Mammary epithelial cell (primary cell): ENCODE measurements at regions of chr1 and their contacts with region 1.

Region 1: GRCh38 chr1:182789138-182790076 is at the start of gene NPL:
- DNase-seq: peak; percentile 75
- H3K4me3 ChIP-seq: peak within 1 kb of the TSS; percentile 67 to 79 (median 75)
- H3K27ac ChIP-seq: no peak within 1 kb of the TSS
- H3K4me1 ChIP-seq: peaks cover 12% of the 10 kb centered on the region
- H3K27me3 ChIP-seq: no peaks in the 10 kb centered on the region
- CTCF ChIP-seq: no peak
- total RNA-seq, gene NPL: 3.3 to 4.3 TPM

Region 2: DNA sequence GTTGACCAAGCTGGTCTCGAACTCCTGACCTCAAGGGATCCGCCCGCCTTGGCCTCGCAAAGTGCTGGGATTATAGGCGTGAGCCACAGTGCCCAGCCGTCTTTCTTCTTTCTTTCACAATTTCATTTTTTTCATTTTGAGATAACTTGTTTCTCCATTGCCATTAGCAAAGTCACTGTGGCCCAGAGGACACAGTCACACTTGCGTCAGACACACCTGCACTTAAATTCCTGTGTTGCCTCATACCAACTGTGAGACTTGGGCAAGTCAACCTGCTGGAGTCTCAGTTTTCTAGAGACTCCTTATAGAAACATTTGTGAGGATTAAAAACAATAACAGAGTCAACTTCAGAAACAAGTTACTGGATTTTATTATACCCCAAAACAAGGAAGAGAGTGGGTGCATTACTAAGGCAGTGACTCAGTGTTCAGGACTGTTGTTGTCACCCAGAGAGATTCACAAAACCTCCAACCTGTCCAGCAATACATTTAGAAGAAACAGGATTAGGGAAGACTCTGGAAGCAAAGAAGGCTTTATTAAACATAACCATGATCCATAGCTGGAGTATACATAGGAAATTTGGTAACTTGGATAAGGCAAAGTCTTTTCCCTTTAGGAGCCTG is 391.5 kb before region 1 on chr1:
- CTCF ChIA-PET with region 1: no interaction called
- dilution Hi-C with region 1: no loop called
- in situ Hi-C with region 1: no loop called
- intact Hi-C with region 1: loop called (anchors 5 kb)
- DNase-seq: peak; percentile 75
- H3K4me3 ChIP-seq: no peak overlapping the region
- H3K27ac ChIP-seq: no peak overlapping the region
- H3K4me1 ChIP-seq: peaks cover 18% of the 10 kb centered on the region
- H3K27me3 ChIP-seq: no peaks in the 10 kb centered on the region
- CTCF ChIP-seq: no peak

Region 3: DNA sequence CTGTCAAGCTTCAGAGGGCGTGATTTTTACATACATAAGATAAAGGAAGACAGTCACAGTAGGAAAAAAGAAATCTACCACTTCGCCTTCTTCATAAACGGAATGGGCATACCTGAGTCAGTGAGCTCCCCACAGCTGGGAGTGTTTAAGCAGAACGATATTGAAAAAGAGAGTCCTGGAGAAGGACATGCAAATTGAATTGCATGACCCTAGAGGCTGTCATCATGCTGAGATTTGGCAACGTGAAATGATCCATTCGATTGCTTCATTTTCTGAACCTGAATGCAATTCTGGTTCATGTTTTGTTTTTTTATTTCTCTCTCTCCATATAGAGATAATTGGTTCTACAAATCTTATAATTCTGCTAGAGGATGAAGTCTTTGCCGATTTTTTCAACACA is 335.8 kb before region 1 on chr1:
- CTCF ChIA-PET with region 1: no interaction called
- dilution Hi-C with region 1: no loop called
- in situ Hi-C with region 1: loop called (anchors 10 kb)
- intact Hi-C with region 1: no loop called
- DNase-seq: no peak
- H3K4me3 ChIP-seq: no peak overlapping the region
- H3K27ac ChIP-seq: no peak overlapping the region
- H3K4me1 ChIP-seq: no peaks in the 10 kb centered on the region
- H3K27me3 ChIP-seq: peaks cover 4% of the 10 kb centered on the region
- CTCF ChIP-seq: no peak

Region 4: GRCh38 chr1:182604169-182605164 is 184.9 kb before region 1 on chr1 and contains the start of gene RGS16:
- CTCF ChIA-PET with region 1: interaction called, 18 read pairs
- dilution Hi-C with region 1: loop called (anchors 5 kb)
- in situ Hi-C with region 1: loop called (anchors 5 kb)
- intact Hi-C with region 1: no loop called
- DNase-seq: peak; percentile 84
- H3K4me3 ChIP-seq: peak within 1 kb of the TSS; percentile 49 to 72 (median 67)
- H3K27ac ChIP-seq: no peak within 1 kb of the TSS
- H3K4me1 ChIP-seq: peaks cover 11% of the 10 kb centered on the region
- H3K27me3 ChIP-seq: no peaks in the 10 kb centered on the region
- CTCF ChIP-seq: no peak
- total RNA-seq, gene RGS16: 0.33 to 0.52 TPM

Region 5: DNA sequence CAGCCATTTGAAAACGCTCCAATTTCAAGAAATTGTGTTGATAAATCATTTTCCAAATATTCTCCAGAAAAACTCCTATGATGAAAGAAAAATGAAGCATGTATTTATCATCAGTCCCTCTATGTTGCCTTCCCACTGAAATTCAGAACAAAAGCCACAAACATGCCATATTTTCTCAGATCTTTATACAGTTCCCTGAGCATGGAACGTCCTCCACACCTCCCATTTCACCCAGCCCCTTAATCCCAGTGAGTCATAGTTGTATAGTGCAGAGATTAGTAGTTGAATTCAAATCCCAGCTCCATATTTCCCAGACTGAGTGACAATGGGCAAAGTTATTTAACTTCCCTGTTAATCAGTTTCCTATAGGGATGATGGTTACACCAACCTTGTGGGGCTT is 20.4 kb before region 1 on chr1:
- CTCF ChIA-PET with region 1: no interaction called
- dilution Hi-C with region 1: no loop called
- in situ Hi-C with region 1: no loop called
- intact Hi-C with region 1: no loop called
- DNase-seq: peak; percentile 30
- H3K4me3 ChIP-seq: no peak overlapping the region
- H3K27ac ChIP-seq: no peak overlapping the region
- H3K4me1 ChIP-seq: no peaks in the 10 kb centered on the region
- H3K27me3 ChIP-seq: no peaks in the 10 kb centered on the region
- CTCF ChIP-seq: no peak

Region 6: GRCh38 chr1:182802006-182802803 is 12.8 kb after region 1 on chr1:
- CTCF ChIA-PET with region 1: no interaction called
- dilution Hi-C with region 1: no loop called
- in situ Hi-C with region 1: no loop called
- intact Hi-C with region 1: loop called (anchors 1 kb)
- DNase-seq: peak; percentile 78
- H3K4me3 ChIP-seq: no peak overlapping the region
- H3K27ac ChIP-seq: no peak overlapping the region
- H3K4me1 ChIP-seq: peaks cover 14% of the 10 kb centered on the region
- H3K27me3 ChIP-seq: no peaks in the 10 kb centered on the region
- CTCF ChIP-seq: no peak

Region 7: GRCh38 chr1:182939413-182939812 is 150.0 kb after region 1 on chr1:
- CTCF ChIA-PET with region 1: no interaction called
- dilution Hi-C with region 1: no loop called
- in situ Hi-C with region 1: no loop called
- intact Hi-C with region 1: no loop called
- DNase-seq: no peak
- H3K4me3 ChIP-seq: no peak overlapping the region
- H3K27ac ChIP-seq: no peak overlapping the region
- H3K4me1 ChIP-seq: no peaks in the 10 kb centered on the region
- H3K27me3 ChIP-seq: no peaks in the 10 kb centered on the region
- CTCF ChIP-seq: no peak